ENCODE measurements at regions of chr4 and their contacts with region 1.

Region 1: DNA sequence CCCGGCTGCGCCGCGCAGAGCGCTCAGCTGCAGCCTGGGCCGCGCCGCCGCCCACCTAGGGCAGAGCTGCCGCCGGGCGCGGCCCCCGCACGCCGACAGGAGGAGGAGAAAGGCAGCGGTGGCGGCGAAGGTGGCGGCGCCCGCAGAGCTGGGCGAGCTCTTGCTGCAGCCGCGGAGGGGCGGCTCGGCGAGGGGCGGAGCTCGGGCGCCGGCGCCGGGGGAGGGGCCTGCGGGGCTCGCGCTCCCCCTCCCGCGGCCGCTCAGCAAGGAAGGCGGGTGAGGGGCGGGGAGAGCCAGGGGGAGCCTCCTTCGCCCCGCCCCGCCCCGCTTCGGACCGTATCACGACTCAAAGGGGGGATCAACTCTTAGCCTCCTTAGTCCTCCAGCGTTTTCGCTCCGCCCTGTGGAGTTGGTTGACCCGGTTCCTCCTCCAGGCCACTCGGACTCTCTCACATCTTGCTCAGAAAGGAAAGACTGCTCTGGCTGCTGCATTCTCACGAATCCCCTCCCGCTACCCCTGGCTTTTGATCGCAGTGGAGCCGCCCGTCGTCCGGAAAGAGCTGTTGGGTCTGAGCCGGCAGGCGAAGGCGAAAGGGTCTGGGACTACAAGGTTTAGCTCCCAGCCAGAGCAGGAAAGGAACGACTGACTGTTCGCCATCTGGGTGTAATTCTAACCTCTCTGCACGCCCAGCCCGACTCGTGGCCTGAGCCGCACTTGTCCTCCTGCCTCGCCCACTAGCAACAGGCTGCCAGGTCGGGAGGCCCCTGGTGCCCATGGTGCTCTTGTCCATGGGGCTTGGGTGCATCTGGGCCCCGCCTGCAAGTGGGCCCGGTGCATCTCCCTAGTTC is at the start of gene ATP8A1:
- DNase-seq: peak; percentile 94
- ATAC-seq: peak; percentile 96 to 99 (median 98)
- H3K4me3 ChIP-seq: peak within 1 kb of the TSS; percentile 71 to 99 (median 88)
- H3K27ac ChIP-seq: peak within 1 kb of the TSS; percentile 72 to 97 (median 92)
- H3K4me1 ChIP-seq: peaks cover 10 to 51% (median 34%) of the 10 kb centered on the region in 9 donors
- H3K27me3 ChIP-seq: no peaks in the 10 kb centered on the region
- CTCF ChIP-seq: peak in 2 of 9 donors; percentile 10 to 11
- total RNA-seq, gene ATP8A1: 11.6 to 27.9 (median 18.3) TPM

Region 2: DNA sequence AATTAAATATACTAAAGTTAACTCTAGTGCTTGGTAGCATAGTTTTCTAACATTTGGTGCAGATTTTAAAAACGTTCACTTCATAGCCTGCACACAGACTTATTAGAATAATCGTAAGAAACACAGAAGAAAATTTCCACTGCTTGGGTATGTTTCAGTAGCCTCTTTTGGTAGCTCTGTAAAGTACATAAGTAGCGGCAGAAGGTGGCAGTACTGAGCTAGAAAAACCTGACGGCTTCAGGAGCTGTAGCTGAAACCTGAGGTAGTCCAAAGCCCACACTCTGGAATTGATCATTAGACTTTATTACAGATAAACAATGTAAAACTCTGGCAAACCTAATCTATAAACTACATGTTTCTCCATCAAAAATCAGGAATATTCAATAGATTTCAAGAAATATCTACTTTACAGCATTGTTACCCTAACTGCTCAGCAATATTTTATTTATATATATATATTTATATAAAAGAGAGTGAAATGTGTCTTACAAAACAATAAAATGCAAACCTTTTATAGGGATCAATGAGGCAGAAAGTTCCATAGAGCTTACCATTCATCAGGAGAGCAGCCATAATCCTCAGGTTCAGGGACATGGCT is 88.5 kb before region 1 on chr4:
- intact Hi-C with region 1: loop called in 6 of 10 experiments (anchors 1 to 10 kb)
- DNase-seq: peak in 1 of 2 donors; percentile 73
- ATAC-seq: peak in 7 of 8 donors; percentile 75 to 90 (median 82)
- H3K4me3 ChIP-seq: no peak overlapping the region
- H3K27ac ChIP-seq: no peak overlapping the region
- H3K4me1 ChIP-seq: peaks cover 0 to 18% (median 7%) of the 10 kb centered on the region in 9 donors
- H3K27me3 ChIP-seq: no peaks in the 10 kb centered on the region
- CTCF ChIP-seq: peak; percentile 49 to 85 (median 75)

Region 3: GRCh38 chr4:42605264-42605663 is 51.9 kb before region 1 on chr4:
- intact Hi-C with region 1: loop called in 3 of 10 experiments (anchors 5 kb)
- DNase-seq: no peak
- ATAC-seq: peak; percentile 52 to 86 (median 80)
- H3K4me3 ChIP-seq: no peak overlapping the region
- H3K27ac ChIP-seq: peak overlapping the region in 5 of 10 donors; percentile 5 to 42 (median 35)
- H3K4me1 ChIP-seq: peaks cover 0 to 61% (median 25%) of the 10 kb centered on the region in 9 donors
- H3K27me3 ChIP-seq: no peaks in the 10 kb centered on the region
- CTCF ChIP-seq: no peak

Region 4: GRCh38 chr4:42610941-42611340 is 46.2 kb before region 1 on chr4:
- intact Hi-C with region 1: loop called in 4 of 10 experiments (anchors 5 kb)
- DNase-seq: no peak
- ATAC-seq: peak; percentile 30 to 91 (median 66)
- H3K4me3 ChIP-seq: no peak overlapping the region
- H3K27ac ChIP-seq: peak overlapping the region in 5 of 10 donors; percentile 36 to 61 (median 56)
- H3K4me1 ChIP-seq: peaks cover 0 to 66% (median 14%) of the 10 kb centered on the region in 9 donors
- H3K27me3 ChIP-seq: no peaks in the 10 kb centered on the region
- CTCF ChIP-seq: no peak

Region 5: GRCh38 chr4:42617030-42617429 is 40.1 kb before region 1 on chr4:
- intact Hi-C with region 1: loop called in 2 of 10 experiments (anchors 5 kb)
- DNase-seq: no peak
- ATAC-seq: peak in 3 of 8 donors; percentile 53 to 69 (median 55)
- H3K4me3 ChIP-seq: no peak overlapping the region
- H3K27ac ChIP-seq: no peak overlapping the region
- H3K4me1 ChIP-seq: peaks cover 0 to 38% (median 14%) of the 10 kb centered on the region in 9 donors
- H3K27me3 ChIP-seq: no peaks in the 10 kb centered on the region
- CTCF ChIP-seq: no peak

Region 6: GRCh38 chr4:42627885-42628646 is 29.1 kb before region 1 on chr4:
- intact Hi-C with region 1: loop called in 2 of 10 experiments (anchors 1 to 2 kb)
- DNase-seq: peak; percentile 79 to 88
- ATAC-seq: peak; percentile 97 to 100 (median 99)
- H3K4me3 ChIP-seq: peak overlapping the region in 1 of 10 donors; percentile 5
- H3K27ac ChIP-seq: peak overlapping the region in 9 of 10 donors; percentile 2 to 72 (median 45)
- H3K4me1 ChIP-seq: peaks cover 5 to 63% (median 40%) of the 10 kb centered on the region in 9 donors
- H3K27me3 ChIP-seq: no peaks in the 10 kb centered on the region
- CTCF ChIP-seq: no peak